ENCODE measurements at regions of chr1 and their contacts with region 1.

Region 1: GRCh38 chr1:38114241-38115026 is 67.8 kb upstream of the POU3F1 start:
- DNase-seq: peak; percentile 37 to 95 (median 73)

Region 2: DNA sequence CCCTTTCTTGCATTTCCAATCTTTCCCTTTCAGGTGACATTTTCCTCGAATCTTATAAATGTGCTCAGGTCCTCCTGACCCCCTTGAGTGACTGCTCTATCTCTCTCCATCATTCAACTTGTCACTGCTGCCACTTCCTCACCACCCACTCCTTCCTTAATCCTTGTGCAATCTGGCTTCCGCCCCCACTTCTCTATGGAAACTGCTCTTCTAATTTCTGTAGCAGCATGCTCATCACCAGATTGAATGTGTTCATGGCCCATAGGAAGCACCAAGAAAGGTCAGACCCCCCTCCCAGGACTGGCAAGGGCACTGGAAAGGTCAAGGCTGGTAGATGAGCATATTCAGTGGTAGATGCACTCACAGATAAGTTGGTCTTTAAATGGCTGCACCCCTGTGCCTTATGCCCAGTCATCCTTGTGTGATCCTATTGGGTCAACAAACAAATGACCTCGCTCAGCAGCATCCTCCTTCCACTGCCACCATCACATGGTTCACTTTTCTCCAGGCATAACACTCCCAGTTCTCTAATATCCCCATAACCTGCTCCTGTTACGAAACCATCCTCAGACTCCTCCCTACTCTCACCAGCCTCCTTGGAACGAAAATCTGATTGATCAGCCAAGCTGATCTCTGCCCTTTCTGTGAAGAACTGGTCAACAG is 220.6 kb after region 1 on chr1:
- intact Hi-C with region 1: loop called (anchors 10 kb)
- DNase-seq: no peak